SK-N-SH (cell line): ENCODE measurements at regions of chr17 and their contacts with region 1.

Region 1: GRCh38 chr17:82536512-82537201 is 17.1 kb downstream of the FOXK2 start:
- DNase-seq: peak; percentile 54
- H3K4me3 ChIP-seq: peak overlapping the region in 1 of 2 experiments; percentile 49; a peak in 2 of 4 replicates
- H3K27ac ChIP-seq: peak overlapping the region; percentile 87 to 97
- H3K4me1 ChIP-seq: peaks cover 28 to 38% of the 10 kb centered on the region in 2 experiments
- H3K27me3 ChIP-seq: no peaks in the 10 kb centered on the region
- CTCF ChIP-seq: no peak
- EP300 ChIP-seq: peak in 1 of 2 experiments; percentile 53; a peak in 2 of 4 replicates
- RAD21 ChIP-seq: no peak

Region 2: GRCh38 chr17:82518826-82519810 is 17.5 kb before region 1 on chr17 and contains the start of gene FOXK2:
- CTCF ChIA-PET with region 1: interaction called, 23 read pairs
- POLR2A ChIA-PET with region 1: interaction called, 4 read pairs
- DNase-seq: peak; percentile 100
- H3K4me3 ChIP-seq: peak within 1 kb of the TSS; percentile 62 to 75
- H3K27ac ChIP-seq: peak within 1 kb of the TSS; percentile 60 to 70
- H3K4me1 ChIP-seq: peaks cover 2 to 6% of the 10 kb centered on the region in 2 experiments; a peak in 1 of 4 replicates
- H3K27me3 ChIP-seq: no peaks in the 10 kb centered on the region
- CTCF ChIP-seq: no peak
- EP300 ChIP-seq: peak in 1 of 2 experiments; percentile 45; a peak in 1 of 4 replicates
- RAD21 ChIP-seq: no peak
- polyA plus RNA-seq, gene FOXK2: 33.6 and 36.4 TPM in 2 replicates

Region 3: DNA sequence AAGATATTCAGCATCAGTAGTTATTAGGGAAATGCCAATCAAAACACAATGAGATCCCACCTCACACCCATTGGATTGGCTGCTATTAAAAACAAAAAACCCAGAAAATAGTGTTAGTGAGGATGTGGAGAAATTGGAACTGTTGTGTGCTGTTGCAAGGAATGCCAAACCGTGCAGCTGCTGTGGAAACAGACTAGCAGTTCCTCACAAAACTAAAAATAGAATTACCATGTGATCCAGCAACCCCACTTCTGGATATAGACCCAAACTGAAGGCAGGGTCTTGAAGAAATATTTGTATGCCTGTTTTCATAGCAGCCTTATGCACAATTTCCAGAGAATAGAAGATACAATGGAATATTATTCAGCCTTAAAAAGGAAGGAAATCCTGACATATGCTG is 28.9 kb after region 1 on chr17:
- CTCF ChIA-PET with region 1: no interaction called
- POLR2A ChIA-PET with region 1: no interaction called
- DNase-seq: no peak
- H3K4me3 ChIP-seq: no peak overlapping the region
- H3K27ac ChIP-seq: no peak overlapping the region
- H3K4me1 ChIP-seq: peaks cover 0 to 5% of the 10 kb centered on the region in 2 experiments; a peak in 2 of 4 replicates
- H3K27me3 ChIP-seq: no peaks in the 10 kb centered on the region
- CTCF ChIP-seq: no peak
- EP300 ChIP-seq: no peak
- RAD21 ChIP-seq: no peak